ENCODE measurements at regions of chr6 and their contacts with region 1.

Region 1: GRCh38 chr6:17381424-17382147 is 11.8 kb upstream of the CAP2 start:
- DNase-seq: no peak
- ATAC-seq: no peak
- H3K4me3 ChIP-seq: no peak overlapping the region
- H3K27ac ChIP-seq: no peak overlapping the region
- H3K4me1 ChIP-seq: peaks cover 0 to 6% of the 10 kb centered on the region in 2 experiments; a peak in 2 of 4 replicates
- H3K27me3 ChIP-seq: no peaks in the 10 kb centered on the region
- CTCF ChIP-seq: no peak
- POLR2A ChIP-seq: no peak
- RAD21 ChIP-seq: no peak

Region 2: GRCh38 chr6:16466800-16467553 is 914.6 kb before region 1 on chr6:
- CTCF ChIA-PET with region 1: no interaction called
- POLR2A ChIA-PET with region 1: no interaction called
- RAD21 ChIA-PET with region 1: no interaction called
- intact Hi-C with region 1: loop called (anchors 10 kb)
- DNase-seq: no peak
- ATAC-seq: no peak
- H3K4me3 ChIP-seq: no peak overlapping the region
- H3K27ac ChIP-seq: no peak overlapping the region
- H3K4me1 ChIP-seq: no peaks in the 10 kb centered on the region
- H3K27me3 ChIP-seq: no peaks in the 10 kb centered on the region
- CTCF ChIP-seq: no peak
- POLR2A ChIP-seq: no peak
- RAD21 ChIP-seq: no peak

Region 3: GRCh38 chr6:17446713-17447112 is 65.1 kb after region 1 on chr6:
- CTCF ChIA-PET with region 1: no interaction called
- POLR2A ChIA-PET with region 1: no interaction called
- RAD21 ChIA-PET with region 1: no interaction called
- intact Hi-C with region 1: no loop called
- DNase-seq: no peak
- ATAC-seq: peak; percentile 54; the same call in 1 of the 2 replicates
- H3K4me3 ChIP-seq: no peak overlapping the region
- H3K27ac ChIP-seq: no peak overlapping the region
- H3K4me1 ChIP-seq: no peaks in the 10 kb centered on the region
- H3K27me3 ChIP-seq: no peaks in the 10 kb centered on the region
- CTCF ChIP-seq: 0 out of 6 replicates have a peak, but pooled peaks of 2 of the 3 experiments have one; percentile 15 to 19
- POLR2A ChIP-seq: no peak
- RAD21 ChIP-seq: peak; percentile 14; the same call in 1 of the 2 replicates